ENCODE measurements at regions of chr5 and their contacts with region 1.

Region 1: GRCh38 chr5:132466433-132467286 is 23.9 kb downstream of the IRF1 start:
- H3K4me3 Mint-ChIP-seq: no peak overlapping the region
- H3K27ac Mint-ChIP-seq: peak overlapping the region; percentile 67
- H3K4me1 Mint-ChIP-seq: peaks cover 83% of the 10 kb centered on the region
- H3K27me3 Mint-ChIP-seq: peaks cover 5% of the 10 kb centered on the region

Region 2: GRCh38 chr5:132394667-132395259 is 71.9 kb before region 1 on chr5:
- intact Hi-C with region 1: no loop called
- H3K4me3 Mint-ChIP-seq: no peak overlapping the region
- H3K27ac Mint-ChIP-seq: no peak overlapping the region
- H3K4me1 Mint-ChIP-seq: peaks cover 11% of the 10 kb centered on the region
- H3K27me3 Mint-ChIP-seq: peaks cover 3% of the 10 kb centered on the region

Region 3: DNA sequence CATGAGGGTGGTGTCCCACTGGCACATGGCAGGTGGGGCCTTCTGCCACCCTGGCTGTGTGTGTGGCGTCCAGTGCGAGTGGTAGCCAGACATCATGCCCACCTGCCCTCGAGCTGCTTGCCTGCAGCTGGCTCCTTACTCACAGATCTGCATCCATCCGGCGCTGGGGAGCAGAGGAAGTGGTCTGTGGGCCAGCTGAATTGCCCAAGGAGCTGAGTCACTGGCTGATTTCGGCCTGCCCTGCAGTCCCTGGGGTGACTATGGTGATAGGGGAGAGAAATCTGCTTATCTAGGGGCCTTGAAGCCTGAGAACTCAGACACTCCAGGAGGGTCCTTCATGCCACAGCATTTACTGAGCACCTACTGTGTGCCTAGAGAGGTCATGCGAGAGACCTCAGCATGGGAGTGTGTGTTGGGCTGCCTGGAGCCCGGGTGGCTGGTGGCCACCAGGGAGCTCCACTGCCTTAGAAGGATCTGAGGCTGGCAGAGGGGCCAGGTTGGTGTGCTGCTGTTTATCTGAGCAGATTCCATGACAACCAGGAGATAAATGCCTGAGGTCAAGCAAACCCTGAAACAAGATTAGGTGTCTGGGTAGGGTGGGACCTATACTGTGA is 40.0 kb before region 1 on chr5:
- intact Hi-C with region 1: loop called (anchors 2 kb)
- H3K4me3 Mint-ChIP-seq: no peak overlapping the region
- H3K27ac Mint-ChIP-seq: peak overlapping the region; percentile 87
- H3K4me1 Mint-ChIP-seq: peaks cover 97% of the 10 kb centered on the region
- H3K27me3 Mint-ChIP-seq: no peaks in the 10 kb centered on the region